Sigmoid colon (tissue), 7 donors: ENCODE measurements at regions of chr9 and their contacts with region 1.

Region 1: DNA sequence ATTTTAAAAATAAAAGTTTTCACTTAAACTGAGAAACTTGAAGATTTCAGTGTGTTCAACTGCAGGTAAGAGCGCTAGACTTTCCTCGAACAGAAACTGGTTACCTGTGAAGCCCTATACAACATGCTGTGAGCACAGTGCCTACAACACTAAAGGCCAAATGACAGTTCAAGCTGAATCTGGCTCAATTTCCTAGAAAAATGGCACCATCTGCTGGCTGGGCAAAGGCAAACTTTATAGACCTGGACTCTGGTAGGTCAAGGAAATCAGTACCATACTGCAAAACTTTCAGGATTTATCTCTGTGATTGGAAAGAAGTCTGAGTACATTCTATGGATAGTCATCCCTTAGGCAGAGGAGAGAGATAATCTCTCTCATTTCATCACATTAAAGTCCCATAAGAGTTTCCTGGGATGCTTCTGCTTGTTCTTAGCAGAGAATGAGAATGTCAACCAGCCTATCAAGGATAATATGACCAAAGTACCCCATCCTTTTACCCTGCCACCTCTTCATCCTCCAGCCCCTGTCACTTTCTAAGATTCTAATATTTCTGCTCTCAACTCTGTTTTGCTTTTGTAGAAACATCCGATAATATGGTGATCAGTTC is 31.8 kb upstream of the FOXB2 start:
- DNase-seq: no peak
- H3K4me3 ChIP-seq: no peak overlapping the region
- H3K27ac ChIP-seq: no peak overlapping the region
- H3K4me1 ChIP-seq: peaks cover 0 to 5% (median 0%) of the 10 kb centered on the region in 4 donors
- H3K27me3 ChIP-seq: no peaks in the 10 kb centered on the region
- CTCF ChIP-seq: peak; percentile 44 to 53 (median 50)
- EP300 ChIP-seq: no peak
- POLR2A ChIP-seq: no peak

Region 2: DNA sequence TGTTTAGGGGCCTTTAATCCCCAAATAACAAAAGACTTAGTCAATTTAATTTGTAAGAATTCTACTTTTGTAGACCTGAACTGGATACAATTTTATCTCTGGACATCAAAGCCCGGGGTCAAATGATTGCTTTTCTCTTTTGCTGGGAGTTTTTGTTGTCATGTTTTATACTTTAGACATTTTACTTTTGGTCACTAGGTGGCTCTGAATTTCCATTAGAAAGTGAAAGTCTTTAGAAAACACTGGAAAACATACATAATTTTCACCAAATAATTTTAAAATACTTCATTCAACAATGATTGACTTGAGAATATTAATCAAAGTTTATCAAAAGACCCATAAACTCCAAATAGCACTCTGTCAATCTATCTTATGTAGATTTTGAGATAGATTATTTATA is 226.2 kb before region 1 on chr9:
- intact Hi-C with region 1: loop called (anchors 5 kb)
- DNase-seq: no peak
- H3K4me3 ChIP-seq: no peak overlapping the region
- H3K27ac ChIP-seq: peak overlapping the region in 1 of 4 donors; percentile 2
- H3K4me1 ChIP-seq: peaks cover 0 to 41% (median 22%) of the 10 kb centered on the region in 4 donors
- H3K27me3 ChIP-seq: no peaks in the 10 kb centered on the region
- CTCF ChIP-seq: peak in 2 of 4 experiments; percentile 11 to 25
- EP300 ChIP-seq: no peak
- POLR2A ChIP-seq: no peak

Region 3: DNA sequence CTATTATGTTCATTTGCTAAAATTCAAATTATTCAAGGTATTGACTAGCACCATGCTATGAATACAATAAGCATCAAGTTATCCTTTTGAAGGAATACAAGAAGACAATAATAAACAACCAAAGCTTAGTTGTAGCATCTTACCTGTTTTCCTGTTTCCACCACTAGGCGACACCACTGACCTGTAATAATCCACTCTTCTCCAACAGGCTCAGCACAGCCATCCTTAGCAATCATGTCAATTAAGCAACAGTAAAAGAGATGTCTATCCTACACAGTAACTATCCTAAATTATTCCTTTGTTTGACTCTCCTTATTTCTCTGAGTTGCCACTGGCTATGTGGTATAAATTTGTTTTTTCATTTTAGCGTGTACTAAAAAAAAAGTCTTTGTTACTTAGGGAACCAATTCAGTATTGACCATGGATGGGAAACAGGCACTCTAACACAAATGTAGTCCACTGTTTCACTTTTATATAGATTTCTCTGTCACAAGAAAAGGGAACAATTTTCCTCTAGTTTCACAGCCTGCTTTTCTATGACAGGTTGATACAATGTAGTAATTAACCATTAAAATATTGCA is 177.2 kb before region 1 on chr9:
- intact Hi-C with region 1: loop called (anchors 2 kb)
- DNase-seq: no peak
- H3K4me3 ChIP-seq: no peak overlapping the region
- H3K27ac ChIP-seq: peak overlapping the region; percentile 27 to 94 (median 49)
- H3K4me1 ChIP-seq: peaks cover 0 to 36% (median 20%) of the 10 kb centered on the region in 4 donors
- H3K27me3 ChIP-seq: no peaks in the 10 kb centered on the region
- CTCF ChIP-seq: peak; percentile 67 to 89 (median 81)
- EP300 ChIP-seq: no peak
- POLR2A ChIP-seq: no peak

Region 4: DNA sequence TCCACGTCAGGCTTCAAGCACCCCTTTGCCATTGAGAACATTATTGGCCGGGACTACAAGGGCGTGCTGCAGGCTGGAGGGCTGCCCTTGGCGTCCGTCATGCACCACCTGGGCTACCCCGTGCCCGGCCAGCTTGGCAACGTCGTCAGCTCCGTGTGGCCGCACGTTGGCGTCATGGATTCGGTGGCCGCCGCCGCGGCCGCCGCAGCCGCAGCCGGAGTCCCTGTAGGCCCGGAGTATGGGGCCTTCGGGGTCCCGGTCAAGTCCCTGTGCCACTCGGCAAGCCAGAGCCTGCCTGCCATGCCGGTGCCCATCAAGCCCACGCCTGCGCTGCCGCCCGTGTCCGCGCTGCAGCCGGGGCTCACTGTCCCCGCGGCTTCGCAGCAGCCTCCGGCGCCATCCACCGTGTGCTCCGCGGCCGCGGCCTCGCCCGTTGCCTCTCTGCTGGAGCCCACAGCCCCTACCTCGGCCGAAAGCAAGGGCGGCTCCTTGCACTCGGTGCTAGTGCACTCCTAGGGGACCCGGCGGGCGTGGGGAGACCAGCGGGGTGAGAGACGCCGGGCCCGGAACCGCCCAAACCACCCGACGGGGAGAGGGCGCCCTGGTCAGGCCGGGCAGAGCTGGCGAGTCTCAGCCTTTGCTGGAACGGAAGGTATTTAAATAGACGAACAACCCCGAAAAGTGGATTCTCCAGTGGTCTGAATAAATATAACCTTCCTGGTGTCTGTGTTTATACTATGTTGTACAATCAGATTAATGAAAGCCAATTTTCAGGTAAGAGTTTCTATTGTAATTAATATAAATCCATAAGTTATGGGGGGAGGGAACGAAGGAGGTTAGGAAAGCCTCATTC is 33.0 kb after region 1 on chr9:
- intact Hi-C with region 1: no loop called
- DNase-seq: no peak
- H3K4me3 ChIP-seq: peak overlapping the region in 2 of 4 donors; percentile 11 to 12
- H3K27ac ChIP-seq: no peak overlapping the region
- H3K4me1 ChIP-seq: peaks cover 0 to 57% (median 53%) of the 10 kb centered on the region in 4 donors
- H3K27me3 ChIP-seq: peaks cover 70 to 100% (median 89%) of the 10 kb centered on the region in 3 donors
- CTCF ChIP-seq: no peak
- EP300 ChIP-seq: no peak
- POLR2A ChIP-seq: no peak

Region 5: DNA sequence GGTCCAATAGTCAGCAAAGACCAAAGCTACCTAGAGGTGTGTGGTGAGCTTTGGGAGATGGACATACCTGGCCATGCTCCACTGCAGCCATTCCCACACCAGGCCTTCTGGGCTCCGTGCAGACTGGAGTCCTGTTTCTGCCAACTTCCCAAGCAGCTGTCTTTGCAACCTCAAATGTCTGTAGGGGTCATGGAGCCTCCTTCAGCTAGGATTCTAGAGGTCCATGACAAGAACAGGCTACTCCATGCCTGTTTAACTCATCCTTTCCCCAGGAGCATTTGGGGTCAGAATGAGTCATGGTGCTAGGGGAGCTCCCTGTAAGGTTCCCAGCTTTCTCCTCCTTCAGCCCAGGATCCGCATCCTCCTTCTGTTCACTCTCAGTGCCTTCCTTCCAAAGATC is 206.7 kb after region 1 on chr9:
- intact Hi-C with region 1: no loop called
- DNase-seq: no peak
- H3K4me3 ChIP-seq: no peak overlapping the region
- H3K27ac ChIP-seq: no peak overlapping the region
- H3K4me1 ChIP-seq: no peaks in the 10 kb centered on the region
- H3K27me3 ChIP-seq: no peaks in the 10 kb centered on the region
- CTCF ChIP-seq: no peak
- EP300 ChIP-seq: no peak
- POLR2A ChIP-seq: no peak

Region 6: DNA sequence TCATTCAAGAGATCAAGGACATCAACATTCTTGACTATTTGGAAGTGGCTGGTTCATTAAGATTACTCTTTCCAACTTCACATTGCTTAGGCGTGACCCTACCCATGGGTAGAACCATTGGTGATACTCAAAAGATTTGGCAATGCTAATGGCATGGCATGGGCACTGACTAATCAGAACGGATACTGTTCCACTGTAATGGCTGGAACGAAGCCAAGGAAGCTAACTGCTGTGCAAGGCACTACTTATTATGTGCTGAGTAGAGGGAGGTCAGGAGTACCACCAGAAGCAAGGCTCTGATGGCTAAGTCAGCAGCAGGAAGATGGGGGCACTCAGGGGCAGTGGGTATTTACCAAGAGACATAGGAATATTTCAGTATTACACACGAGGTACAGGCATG is 628.5 kb after region 1 on chr9:
- intact Hi-C with region 1: no loop called
- DNase-seq: no peak
- H3K4me3 ChIP-seq: no peak overlapping the region
- H3K27ac ChIP-seq: no peak overlapping the region
- H3K4me1 ChIP-seq: no peaks in the 10 kb centered on the region
- H3K27me3 ChIP-seq: no peaks in the 10 kb centered on the region
- CTCF ChIP-seq: no peak
- EP300 ChIP-seq: no peak
- POLR2A ChIP-seq: no peak